AG04449 (cell line): ENCODE measurements at regions of chr1 and their contacts with region 1.

Region 1: DNA sequence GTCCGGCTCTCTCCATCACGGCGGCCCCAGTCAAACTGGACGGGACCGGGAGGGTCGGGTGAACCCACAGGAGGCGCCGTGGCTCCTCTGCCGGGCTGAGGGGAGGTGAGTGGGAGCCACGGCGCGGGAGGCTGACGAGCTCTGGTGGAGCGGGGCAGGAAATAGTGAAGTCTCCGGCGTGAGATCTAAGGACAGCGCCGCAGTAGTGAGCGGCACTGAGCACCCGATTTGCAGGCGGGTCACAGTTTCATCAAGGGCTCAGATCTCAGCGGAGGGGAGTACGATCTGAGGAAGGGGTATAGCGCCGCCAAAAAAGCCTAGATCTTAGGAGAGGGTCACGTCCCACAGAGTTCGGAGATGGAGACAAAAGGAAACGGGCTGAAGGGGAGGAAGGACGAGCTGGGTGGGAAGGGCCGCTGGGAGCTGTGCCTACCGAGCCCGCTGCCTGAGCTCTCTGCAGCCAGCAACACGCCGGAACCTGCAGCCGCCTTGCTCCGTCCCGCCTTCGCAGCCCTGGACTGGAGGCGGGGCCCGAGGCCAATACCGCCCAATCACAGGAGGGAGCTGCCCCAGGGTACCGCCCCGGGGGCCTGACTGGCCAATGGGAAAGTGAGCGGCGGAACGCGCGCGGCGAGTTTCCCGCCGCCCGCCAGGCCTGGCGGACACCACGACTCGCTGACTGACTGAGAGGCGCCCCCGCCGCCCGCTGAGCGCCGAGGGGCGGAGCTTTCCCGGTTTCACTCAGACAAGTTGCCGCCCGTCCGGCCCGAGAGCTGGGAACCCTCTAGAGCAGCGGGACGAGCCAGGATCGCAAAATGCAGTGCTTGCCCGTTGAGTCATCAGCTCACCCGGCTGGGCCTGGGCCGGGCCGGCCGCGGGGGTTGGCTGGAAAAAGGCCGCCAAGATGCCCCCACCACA is 1.9 kb downstream of the SFN start:
- DNase-seq: peak; percentile 86
- H3K4me3 ChIP-seq: peak overlapping the region; percentile 59
- CTCF ChIP-seq: no peak

Region 2: GRCh38 chr1:26877326-26877725 is 12.5 kb after region 1 on chr1:
- CTCF ChIA-PET with region 1: interaction called, 19 read pairs
- POLR2A ChIA-PET with region 1: no interaction called
- DNase-seq: no peak
- H3K4me3 ChIP-seq: no peak overlapping the region
- CTCF ChIP-seq: no peak

Region 3: GRCh38 chr1:26999440-26999987 is 134.6 kb after region 1 on chr1:
- CTCF ChIA-PET with region 1: no interaction called
- POLR2A ChIA-PET with region 1: no interaction called
- DNase-seq: peak; percentile 96
- H3K4me3 ChIP-seq: no peak overlapping the region
- CTCF ChIP-seq: peak; percentile 22